Activated T-helper 2 cell treated with anti-CD3 and anti-CD28 coated beads, Interferon-gamma antibody, Interleukin-2, Interleukin-4, amounts not matched to agents 10 μg/mL and 5 μg/mL and 100 μg/mL, durations not matched to agents 14 hours and 24 hours and 36 hours (primary cell): ENCODE measurements at regions of chr3 and their contacts with region 1.

Region 1: DNA sequence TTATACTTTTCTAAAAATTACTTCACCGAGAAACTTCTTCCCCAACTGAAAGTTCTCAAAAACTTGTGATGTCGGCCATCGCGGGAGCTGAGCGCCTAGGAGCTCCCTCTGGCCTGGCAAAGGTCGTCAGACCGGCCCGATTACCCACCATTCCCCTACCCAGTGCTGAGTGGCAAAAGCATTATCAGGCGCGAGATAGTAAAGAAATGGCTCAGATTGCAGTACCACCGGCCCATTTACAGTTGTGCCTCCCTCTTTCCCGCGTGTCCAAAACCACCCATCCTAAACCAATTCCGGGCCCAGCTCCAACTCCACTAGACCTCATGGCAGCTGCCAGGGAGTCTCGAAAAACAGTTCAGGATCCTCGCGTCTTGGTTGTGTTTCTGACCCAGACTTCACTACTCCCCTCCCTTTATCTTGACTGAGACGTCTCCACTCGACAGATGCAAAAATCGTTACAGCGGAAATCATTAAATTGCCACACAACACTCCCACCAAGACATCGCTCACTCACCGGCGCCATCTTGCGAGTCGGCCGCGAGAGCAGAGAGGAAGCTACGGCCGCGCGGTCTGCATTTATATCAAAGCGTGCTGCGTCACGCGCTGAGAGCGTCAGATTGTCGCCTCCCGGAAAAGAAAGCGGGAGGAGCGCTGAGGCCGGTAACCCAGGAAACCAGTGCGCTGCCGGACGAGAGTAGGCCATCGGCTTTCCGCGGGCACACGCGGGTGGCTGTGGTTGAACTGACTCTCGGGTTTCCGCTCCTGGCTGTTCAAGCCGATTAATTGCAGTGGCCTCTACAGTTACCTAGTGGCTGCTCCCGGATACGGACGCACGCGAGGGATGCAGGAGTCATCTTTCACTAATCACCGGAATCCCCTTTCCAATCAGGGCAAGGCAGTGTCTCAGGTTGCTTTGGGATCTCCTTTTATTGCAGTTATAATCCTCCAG is at the start of gene RPL22L1:
- DNase-seq: peak; percentile 92
- H3K4me3 Mint-ChIP-seq: peak within 1 kb of the TSS; percentile 91
- H3K27ac Mint-ChIP-seq: peak within 1 kb of the TSS; percentile 97
- H3K4me1 Mint-ChIP-seq: peaks cover 12% of the 10 kb centered on the region
- H3K27me3 Mint-ChIP-seq: peaks cover 6% of the 10 kb centered on the region
- total RNA-seq, gene RPL22L1: 165 and 173 TPM in 2 replicates

Region 2: DNA sequence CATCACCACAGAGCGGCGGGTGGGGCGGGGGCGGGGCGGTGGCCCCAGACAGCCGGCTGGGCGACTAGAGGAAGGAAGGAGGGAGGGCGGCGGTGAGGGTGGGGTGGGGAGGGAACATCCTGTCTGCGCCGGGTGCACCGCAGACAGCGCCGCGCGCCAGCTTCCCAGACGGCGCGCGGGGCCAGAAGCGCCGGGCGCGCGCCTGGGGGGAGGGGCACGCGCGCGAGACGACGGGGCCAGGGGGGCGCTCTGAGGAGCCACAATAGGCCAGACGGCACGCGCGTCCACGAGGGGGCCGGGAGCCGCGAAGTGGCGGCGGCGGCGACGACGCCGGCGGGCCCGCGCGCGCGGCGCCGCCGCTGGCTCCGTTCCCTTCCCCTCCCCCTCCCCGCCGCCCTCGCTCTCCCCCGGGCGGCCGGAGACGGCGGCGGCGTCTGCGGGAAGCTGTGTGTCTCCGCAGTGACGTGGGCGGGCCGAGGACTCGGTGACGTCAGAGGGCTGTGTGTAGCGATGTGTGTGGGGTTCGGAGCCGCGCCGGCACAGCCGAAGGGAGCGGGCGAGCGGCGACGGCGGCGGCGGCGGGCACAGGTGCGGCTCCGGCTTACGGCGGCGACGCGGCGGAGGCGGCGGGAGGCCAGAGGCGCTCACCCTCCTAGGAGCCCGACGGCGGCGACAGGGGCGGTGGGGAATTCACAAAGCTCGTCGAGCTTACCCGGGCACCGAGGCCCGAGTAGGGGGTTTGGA is 512.6 kb before region 1 on chr3 and contains the start of gene SKIL:
- intact Hi-C with region 1: loop called (anchors 1 kb)
- DNase-seq: peak; percentile 93
- H3K4me3 Mint-ChIP-seq: peak within 1 kb of the TSS; percentile 95
- H3K27ac Mint-ChIP-seq: peak within 1 kb of the TSS; percentile 97
- H3K4me1 Mint-ChIP-seq: peaks cover 30% of the 10 kb centered on the region
- H3K27me3 Mint-ChIP-seq: peaks cover 8% of the 10 kb centered on the region
- total RNA-seq, gene SKIL: 31.2 and 33.2 TPM in 2 replicates

Region 3: GRCh38 chr3:170858599-170858998 is 11.3 kb before region 1 on chr3:
- intact Hi-C with region 1: loop called (anchors 1 kb)
- DNase-seq: no peak
- H3K4me3 Mint-ChIP-seq: no peak overlapping the region
- H3K27ac Mint-ChIP-seq: no peak overlapping the region
- H3K4me1 Mint-ChIP-seq: peaks cover 10% of the 10 kb centered on the region
- H3K27me3 Mint-ChIP-seq: no peaks in the 10 kb centered on the region

Region 4: DNA sequence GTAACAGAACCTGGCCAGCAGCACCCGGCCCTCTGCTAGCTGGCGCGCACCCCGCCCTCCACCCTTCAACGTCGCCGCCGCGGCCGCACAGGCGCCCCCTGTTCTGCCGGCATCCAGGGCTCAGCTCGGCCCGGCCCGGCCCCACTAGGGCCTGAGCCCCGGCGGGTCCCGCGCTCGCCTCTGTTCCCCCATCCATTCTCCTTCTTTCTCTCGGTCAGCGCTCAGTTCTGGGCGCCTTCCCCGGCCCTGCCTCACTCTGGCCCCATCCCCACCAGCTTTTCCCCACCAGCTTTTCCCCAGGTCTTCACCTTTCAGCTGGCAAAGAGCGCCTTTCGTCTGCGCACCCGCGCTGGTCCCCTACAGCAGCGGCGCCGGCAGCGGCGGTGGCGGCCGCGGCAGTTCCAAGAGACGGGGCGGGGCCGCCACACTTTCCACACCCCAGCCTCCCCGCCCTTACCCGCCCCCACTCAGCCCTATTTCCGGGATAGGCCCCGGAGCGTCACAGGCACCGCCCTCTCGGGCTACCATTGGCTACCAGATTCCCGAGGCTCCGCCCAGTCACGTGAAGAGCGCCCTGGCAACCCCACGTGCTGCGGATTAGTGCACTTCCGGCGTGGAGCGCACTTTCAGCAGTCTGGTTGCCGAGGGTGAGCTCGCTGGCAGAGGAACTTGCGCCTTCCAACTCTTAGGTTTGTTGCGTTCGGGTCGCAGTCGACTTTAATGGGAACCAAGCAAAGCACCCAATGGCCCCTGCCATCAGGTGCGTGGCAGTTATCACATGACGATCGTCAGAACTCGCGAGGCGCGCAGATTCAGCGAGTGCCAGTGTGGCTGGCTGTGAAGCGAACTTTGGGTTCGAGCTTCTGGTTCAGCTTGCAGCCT is 38.6 kb after region 1 on chr3 and contains the start of gene EIF5A2:
- intact Hi-C with region 1: loop called (anchors 1 kb)
- DNase-seq: peak; percentile 92
- H3K4me3 Mint-ChIP-seq: peak within 1 kb of the TSS; percentile 99
- H3K27ac Mint-ChIP-seq: peak within 1 kb of the TSS; percentile 90
- H3K4me1 Mint-ChIP-seq: peaks cover 20% of the 10 kb centered on the region
- H3K27me3 Mint-ChIP-seq: peaks cover 22% of the 10 kb centered on the region
- total RNA-seq, gene EIF5A2: 9.8 and 10.8 TPM in 2 replicates

Region 5: DNA sequence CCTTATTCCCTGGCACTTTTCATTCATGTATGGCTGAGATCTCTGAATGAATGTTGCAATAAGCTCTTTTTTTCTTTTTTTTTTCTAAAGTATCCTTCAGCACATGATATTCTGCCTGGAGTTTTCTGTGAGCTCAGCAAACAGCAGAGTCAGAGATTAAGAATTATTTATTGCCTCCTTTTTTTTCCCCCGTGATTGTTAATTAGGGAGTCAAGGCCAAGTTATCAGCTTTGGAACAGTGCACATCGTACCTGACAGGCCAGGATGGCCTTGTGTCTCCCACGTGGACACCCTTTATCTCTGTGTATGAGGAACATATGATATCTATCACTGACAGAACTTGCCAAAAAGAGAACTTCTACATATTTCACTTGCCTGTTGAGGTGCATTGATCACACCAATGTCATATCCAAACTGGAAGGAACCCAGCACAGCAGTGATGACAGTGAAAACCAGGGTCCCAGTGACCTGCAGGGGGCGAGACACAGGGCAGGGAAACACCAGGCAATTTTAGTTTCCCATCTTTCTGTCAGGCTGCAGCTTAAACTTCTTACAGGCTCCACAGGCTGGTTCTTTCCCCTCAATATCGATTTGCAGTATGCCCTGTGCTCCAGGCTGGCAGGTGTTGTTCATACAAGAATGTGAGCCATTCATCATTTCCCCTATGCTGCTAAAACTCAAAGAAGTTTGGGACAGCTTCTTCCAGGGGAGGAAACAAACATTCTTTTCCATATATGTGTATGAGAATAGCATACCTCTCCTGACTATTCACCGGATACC is 148.4 kb after region 1 on chr3:
- intact Hi-C with region 1: no loop called
- DNase-seq: no peak
- H3K4me3 Mint-ChIP-seq: no peak overlapping the region
- H3K27ac Mint-ChIP-seq: no peak overlapping the region
- H3K4me1 Mint-ChIP-seq: peaks cover 1% of the 10 kb centered on the region
- H3K27me3 Mint-ChIP-seq: peaks cover 35% of the 10 kb centered on the region